Left cardiac atrium (tissue), 4 donors: ENCODE measurements at regions of chr2 and their contacts with region 1.

Region 1: DNA sequence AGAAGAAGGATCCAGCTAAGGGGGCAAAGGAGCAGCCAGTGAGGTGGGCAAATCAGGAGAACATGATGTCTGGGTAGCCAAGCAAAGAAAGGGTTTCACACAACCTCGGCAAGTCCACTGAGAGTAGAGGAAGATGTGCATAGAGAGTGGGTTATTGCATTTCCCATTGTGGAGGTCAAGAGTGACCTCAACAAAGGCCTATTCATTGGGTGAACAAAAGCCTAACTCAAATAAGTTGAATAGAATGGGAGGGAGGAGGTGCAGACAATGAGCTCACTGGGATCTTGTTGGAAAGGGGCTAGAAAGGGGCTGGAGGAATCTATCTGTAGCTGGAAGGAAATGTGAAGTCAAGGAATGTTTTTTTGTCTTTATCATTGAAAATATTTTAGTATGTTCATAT is 14.0 kb upstream of the PDCL3 start:
- DNase-seq: no peak
- ATAC-seq: no peak

Region 2: GRCh38 chr2:100460904-100461530 is 87.8 kb before region 1 on chr2:
- intact Hi-C with region 1: loop called in 1 of 2 experiments (anchors 10 kb)
- DNase-seq: no peak
- ATAC-seq: no peak